Activated B cell treated with CpG ODN at 0.5 μM for 24 hours (primary cell): ENCODE measurements at regions of chr6 and their contacts with region 1.

Region 1: DNA sequence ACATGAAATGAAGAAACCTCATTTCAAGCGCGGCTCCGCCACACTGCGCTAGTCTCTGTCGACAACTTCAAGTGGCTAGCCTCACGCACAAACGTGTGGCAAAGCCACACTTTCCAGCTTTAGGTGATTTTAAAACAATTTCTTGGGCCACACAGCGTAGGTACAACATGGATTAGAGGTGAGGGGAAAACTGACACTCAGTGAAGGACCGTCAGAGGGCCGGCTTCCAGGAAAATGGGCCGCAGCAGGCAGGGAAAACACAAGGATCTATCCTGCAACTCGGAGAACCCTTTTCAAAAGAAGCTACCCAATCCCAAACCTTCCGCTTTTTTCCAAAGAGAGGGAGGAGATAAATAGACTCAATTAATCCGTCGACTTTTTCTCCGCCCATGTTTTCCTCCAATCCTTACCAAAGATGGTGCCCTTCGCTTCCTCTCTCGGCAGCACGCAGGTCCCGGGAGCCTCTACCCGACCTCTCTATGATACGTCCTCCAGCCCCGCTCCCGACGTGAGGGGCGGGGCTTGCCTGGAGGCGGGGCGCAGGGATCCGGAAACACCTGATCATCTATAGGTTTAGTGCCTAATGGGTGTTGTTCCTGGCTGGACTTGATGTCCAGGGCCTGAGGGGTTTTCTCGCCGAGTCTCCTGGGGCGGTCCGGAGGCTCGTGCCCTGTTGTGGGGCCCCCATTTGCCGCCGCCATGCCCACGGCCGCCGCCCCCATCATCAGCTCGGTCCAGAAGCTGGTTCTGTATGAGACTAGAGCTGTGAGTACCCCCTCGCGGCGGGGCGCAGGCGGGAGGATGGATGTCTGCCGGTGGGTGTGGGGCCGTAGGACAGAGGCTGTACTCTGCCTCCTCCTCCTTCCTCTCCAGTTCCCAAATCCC is at the starts of genes AK9 and FIG4:
- DNase-seq: peak; percentile 88
- ATAC-seq: peak; percentile 93
- H3K4me3 Mint-ChIP-seq: peak within 1 kb of the TSS; percentile 94
- H3K27ac Mint-ChIP-seq: peak within 1 kb of the TSS; percentile 95
- H3K4me1 Mint-ChIP-seq: peaks cover 42% of the 10 kb centered on the region
- H3K27me3 Mint-ChIP-seq: no peaks in the 10 kb centered on the region
- CTCF ChIP-seq: no peak
- total RNA-seq, gene AK9: 9.1 and 10.6 TPM in 2 replicates
- total RNA-seq, gene FIG4: 19.8 and 21.8 TPM in 2 replicates

Region 2: GRCh38 chr6:108667993-108668392 is 1023.0 kb before region 1 on chr6:
- CTCF ChIA-PET with region 1: no interaction called
- POLR2A ChIA-PET with region 1: no interaction called
- intact Hi-C with region 1: no loop called
- DNase-seq: no peak
- ATAC-seq: no peak
- H3K4me3 Mint-ChIP-seq: no peak overlapping the region
- H3K27ac Mint-ChIP-seq: no peak overlapping the region
- H3K4me1 Mint-ChIP-seq: peaks cover 7% of the 10 kb centered on the region
- H3K27me3 Mint-ChIP-seq: no peaks in the 10 kb centered on the region
- CTCF ChIP-seq: no peak

Region 3: DNA sequence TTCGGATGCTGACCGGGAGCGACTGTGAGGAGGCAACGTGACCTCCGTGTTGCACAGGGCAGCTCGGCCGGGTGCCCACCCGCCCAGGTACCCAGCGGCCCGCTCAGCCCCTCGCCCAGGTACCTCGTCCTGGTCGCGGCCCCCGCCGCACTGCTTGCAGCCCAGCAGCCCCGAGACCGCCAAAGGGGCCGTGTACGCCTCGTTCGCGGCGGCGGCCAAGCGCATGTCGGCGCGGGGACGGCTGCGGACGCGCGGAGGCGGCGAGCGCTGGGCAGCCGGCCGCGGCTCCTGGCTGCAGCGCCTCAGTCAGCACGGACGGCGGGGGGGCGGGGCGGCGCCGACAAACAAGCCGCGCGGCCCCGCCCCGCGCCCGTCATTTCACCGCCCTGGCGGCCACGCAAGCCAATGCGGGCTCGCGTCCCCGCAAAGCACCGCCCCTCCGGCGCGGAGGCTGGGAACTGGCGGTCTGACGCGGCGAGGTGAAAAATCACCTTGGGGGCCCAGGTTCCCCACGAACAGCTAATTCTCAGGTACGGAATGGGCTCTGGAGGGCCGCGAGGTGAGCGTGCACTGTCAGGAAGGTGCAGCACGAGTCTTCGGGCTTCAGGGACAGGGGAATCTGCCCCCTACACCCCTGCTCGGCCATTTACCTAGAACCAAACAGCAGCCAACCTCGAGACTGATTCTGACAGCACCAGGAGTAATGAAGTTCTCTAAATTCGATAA is 681.6 kb before region 1 on chr6:
- CTCF ChIA-PET with region 1: no interaction called
- POLR2A ChIA-PET with region 1: no interaction called
- intact Hi-C with region 1: loop called (anchors 2 kb)
- DNase-seq: peak; percentile 87
- ATAC-seq: peak; percentile 97
- H3K4me3 Mint-ChIP-seq: peak overlapping the region; percentile 97
- H3K27ac Mint-ChIP-seq: peak overlapping the region; percentile 95
- H3K4me1 Mint-ChIP-seq: peaks cover 65% of the 10 kb centered on the region
- H3K27me3 Mint-ChIP-seq: no peaks in the 10 kb centered on the region
- CTCF ChIP-seq: no peak

Region 4: GRCh38 chr6:109440331-109441068 is 250.5 kb before region 1 on chr6 and contains the starts of genes PPIL6 and SMPD2:
- CTCF ChIA-PET with region 1: no interaction called
- POLR2A ChIA-PET with region 1: no interaction called
- intact Hi-C with region 1: loop called (anchors 1 kb)
- DNase-seq: peak; percentile 89
- ATAC-seq: peak; percentile 83
- H3K4me3 Mint-ChIP-seq: peak within 1 kb of the TSS; percentile 96
- H3K27ac Mint-ChIP-seq: peak within 1 kb of the TSS; percentile 95
- H3K4me1 Mint-ChIP-seq: peaks cover 34% of the 10 kb centered on the region
- H3K27me3 Mint-ChIP-seq: no peaks in the 10 kb centered on the region
- CTCF ChIP-seq: no peak
- total RNA-seq, gene PPIL6: 0.73 and 0.91 TPM in 2 replicates
- total RNA-seq, gene SMPD2: 24.9 and 28.2 TPM in 2 replicates

Region 5: DNA sequence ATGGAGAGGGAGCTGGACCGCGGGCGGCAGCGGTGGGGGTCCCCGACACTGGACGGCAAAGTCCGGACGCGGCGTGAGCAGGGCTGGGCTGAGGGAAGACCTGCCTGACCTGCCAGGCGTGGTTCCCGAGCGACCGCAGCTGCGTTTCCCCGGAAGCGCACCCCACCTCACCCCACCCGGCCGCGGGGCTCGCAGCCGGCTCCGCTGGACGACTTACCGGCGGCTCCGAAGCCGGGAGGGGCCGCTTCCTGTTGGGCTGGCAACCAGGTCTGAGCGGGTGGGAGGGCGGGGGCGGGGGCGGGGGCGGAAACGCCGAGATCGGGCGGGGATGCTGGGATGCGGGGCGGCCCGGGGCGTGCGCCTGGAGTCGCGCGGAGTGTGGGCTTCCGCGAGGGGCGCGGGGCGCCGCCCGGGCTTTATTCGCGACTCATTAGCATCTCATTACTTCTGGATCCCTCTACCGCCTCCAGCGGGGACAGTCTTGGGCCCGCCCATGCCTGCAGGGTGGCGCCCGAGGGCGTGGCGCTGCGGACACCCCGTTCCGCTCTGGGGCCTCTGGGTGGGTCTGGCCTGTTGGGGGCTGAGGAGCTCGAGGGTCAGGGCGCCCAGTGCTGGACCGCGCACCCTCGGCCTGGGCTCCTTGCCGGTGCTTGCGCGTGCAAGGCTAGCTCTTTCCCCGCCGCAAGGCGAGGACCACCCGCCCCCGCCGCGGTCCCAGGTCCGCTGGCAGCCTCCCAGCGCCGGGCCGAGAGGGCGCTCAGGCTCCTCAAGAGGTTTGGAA is 235.3 kb before region 1 on chr6 and contains the start of gene MICAL1:
- CTCF ChIA-PET with region 1: no interaction called
- POLR2A ChIA-PET with region 1: interaction called, 6 read pairs
- intact Hi-C with region 1: loop called (anchors 1 kb)
- DNase-seq: peak; percentile 82
- ATAC-seq: peak; percentile 58
- H3K4me3 Mint-ChIP-seq: peak within 1 kb of the TSS; percentile 97
- H3K27ac Mint-ChIP-seq: peak within 1 kb of the TSS; percentile 98
- H3K4me1 Mint-ChIP-seq: peaks cover 80% of the 10 kb centered on the region
- H3K27me3 Mint-ChIP-seq: no peaks in the 10 kb centered on the region
- CTCF ChIP-seq: no peak
- total RNA-seq, gene MICAL1: 104 and 120 TPM in 2 replicates

Region 6: DNA sequence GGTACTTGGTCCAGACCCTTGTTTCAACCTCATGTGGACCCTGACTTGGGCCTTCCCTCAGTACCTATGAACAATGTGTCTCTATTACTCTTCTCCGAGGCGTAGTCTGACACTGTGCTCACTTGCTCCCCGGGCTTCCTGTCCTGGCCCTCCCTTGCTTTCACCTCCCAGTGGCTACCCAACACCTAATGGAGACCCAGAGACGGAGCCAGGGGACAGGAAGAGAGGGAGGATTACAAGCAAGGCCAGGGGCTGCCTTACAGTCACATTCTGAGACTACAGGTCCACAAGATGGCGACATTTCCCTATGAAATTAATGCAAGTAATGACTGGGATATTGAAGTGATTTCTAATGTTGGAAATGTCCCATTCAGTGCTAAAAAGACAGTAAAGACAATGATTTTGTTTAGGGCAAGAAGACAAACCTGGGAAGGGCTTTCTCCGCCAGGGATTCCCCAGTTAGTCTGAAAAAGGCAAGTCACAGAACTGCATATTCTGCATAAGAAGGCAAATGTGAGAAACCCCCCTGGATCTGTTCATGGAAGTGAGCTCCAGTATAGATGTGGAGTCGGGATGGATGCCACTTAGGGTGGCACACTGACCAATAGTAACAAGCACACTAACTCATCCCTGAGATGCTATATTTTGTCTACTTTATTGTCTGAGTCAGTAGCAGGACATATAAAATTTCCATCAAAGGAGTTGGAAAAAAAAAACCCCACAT is 163.9 kb before region 1 on chr6:
- CTCF ChIA-PET with region 1: interaction called, 3 read pairs
- POLR2A ChIA-PET with region 1: no interaction called
- intact Hi-C with region 1: loop called (anchors 1 kb)
- DNase-seq: peak; percentile 27
- ATAC-seq: peak; percentile 58
- H3K4me3 Mint-ChIP-seq: no peak overlapping the region
- H3K27ac Mint-ChIP-seq: no peak overlapping the region
- H3K4me1 Mint-ChIP-seq: peaks cover 2% of the 10 kb centered on the region
- H3K27me3 Mint-ChIP-seq: no peaks in the 10 kb centered on the region
- CTCF ChIP-seq: no peak

Region 7: DNA sequence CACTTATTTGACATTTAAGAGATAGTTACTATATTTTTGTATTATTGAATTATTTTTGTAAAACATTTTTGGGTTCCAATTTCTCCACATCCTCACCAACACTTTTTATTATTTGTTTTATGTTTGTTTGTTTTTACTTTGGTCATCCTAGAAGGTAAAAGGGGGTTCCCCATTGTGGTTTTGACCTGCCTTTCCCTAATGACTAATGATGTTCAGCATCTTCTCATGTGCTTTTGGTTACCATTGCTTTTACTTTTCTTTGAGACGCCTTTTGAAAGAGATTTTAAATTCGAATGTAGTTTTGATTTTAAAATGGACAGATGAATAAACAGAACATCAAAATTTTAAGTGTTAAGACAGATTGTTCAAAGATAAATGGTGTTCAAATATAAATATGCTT is 46.8 kb before region 1 on chr6:
- CTCF ChIA-PET with region 1: no interaction called
- POLR2A ChIA-PET with region 1: no interaction called
- intact Hi-C with region 1: no loop called
- DNase-seq: no peak
- ATAC-seq: no peak
- H3K4me3 Mint-ChIP-seq: no peak overlapping the region
- H3K27ac Mint-ChIP-seq: no peak overlapping the region
- H3K4me1 Mint-ChIP-seq: no peaks in the 10 kb centered on the region
- H3K27me3 Mint-ChIP-seq: no peaks in the 10 kb centered on the region
- CTCF ChIP-seq: no peak

Region 8: GRCh38 chr6:110981202-110981600 is 1290.2 kb after region 1 on chr6:
- CTCF ChIA-PET with region 1: no interaction called
- POLR2A ChIA-PET with region 1: no interaction called
- intact Hi-C with region 1: loop called (anchors 5 kb)
- DNase-seq: no peak
- ATAC-seq: no peak
- H3K4me3 Mint-ChIP-seq: peak overlapping the region; percentile 95
- H3K27ac Mint-ChIP-seq: peak overlapping the region; percentile 98
- H3K4me1 Mint-ChIP-seq: peaks cover 37% of the 10 kb centered on the region
- H3K27me3 Mint-ChIP-seq: no peaks in the 10 kb centered on the region
- CTCF ChIP-seq: no peak